Mammary epithelial cell (primary cell): ENCODE measurements at regions of chr17 and their contacts with region 1.

Region 1: DNA sequence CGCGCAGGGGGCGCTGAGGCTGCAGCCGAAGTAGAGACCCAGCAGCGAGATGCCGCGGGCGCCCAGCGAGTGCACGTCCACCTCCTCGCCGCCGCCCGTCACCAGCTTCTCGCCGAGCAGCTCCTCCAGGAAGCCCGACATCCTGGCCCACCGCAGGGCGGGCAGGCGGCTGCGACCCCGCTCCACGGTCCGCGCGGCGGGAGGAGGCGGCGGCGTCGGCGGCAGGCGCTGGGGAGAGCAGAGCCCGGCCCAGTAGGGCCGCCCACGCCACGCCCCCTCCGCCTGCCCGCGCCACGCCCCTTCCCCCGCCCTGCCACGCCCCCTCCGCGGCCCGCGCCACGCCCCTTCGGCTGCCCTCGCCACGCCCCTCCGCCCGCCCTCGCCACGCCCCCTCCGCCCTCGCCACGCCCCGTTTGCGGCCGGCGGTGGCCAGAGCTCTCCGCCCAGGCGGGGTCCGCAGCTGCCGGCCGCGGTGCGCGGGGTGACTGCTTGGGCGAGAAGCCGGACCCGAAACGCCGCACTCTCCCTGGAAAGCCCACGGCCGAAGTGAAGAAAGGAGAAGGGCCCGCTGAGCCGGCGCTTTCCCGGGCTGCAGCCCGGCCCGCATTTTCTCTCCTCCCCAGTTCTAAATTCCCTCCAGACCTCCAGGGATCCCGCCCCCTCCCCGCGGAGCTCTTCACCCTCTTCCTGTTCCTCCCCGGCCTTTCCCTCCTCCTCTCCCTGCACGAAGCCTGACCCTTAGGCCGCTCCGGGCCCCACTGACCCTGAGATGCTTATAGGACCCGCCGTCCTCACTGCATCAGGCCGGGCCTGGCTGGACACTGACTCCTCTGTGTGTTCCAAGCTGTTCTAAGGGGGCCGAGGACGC is at the start of gene NXN:
- DNase-seq: peak; percentile 71
- H3K4me3 ChIP-seq: peak within 1 kb of the TSS; percentile 69 to 93 (median 90)
- H3K27ac ChIP-seq: peak within 1 kb of the TSS; percentile 79
- H3K4me1 ChIP-seq: peaks cover 25% of the 10 kb centered on the region
- H3K27me3 ChIP-seq: no peaks in the 10 kb centered on the region
- CTCF ChIP-seq: peak in 1 of 2 donors; percentile 43
- total RNA-seq, gene NXN: 126 to 128 TPM

Region 2: GRCh38 chr17:409848-410545 is 569.8 kb before region 1 on chr17:
- CTCF ChIA-PET with region 1: interaction called, 22 read pairs
- dilution Hi-C with region 1: no loop called
- in situ Hi-C with region 1: no loop called
- intact Hi-C with region 1: no loop called
- DNase-seq: peak; percentile 97
- H3K4me3 ChIP-seq: peak overlapping the region; percentile 65 to 67 (median 66)
- H3K27ac ChIP-seq: peak overlapping the region; percentile 66
- H3K4me1 ChIP-seq: peaks cover 6% of the 10 kb centered on the region
- H3K27me3 ChIP-seq: no peaks in the 10 kb centered on the region
- CTCF ChIP-seq: no peak

Region 3: GRCh38 chr17:732067-732901 is 247.5 kb before region 1 on chr17 and contains the start of gene TLCD3A:
- CTCF ChIA-PET with region 1: no interaction called
- dilution Hi-C with region 1: no loop called
- in situ Hi-C with region 1: no loop called
- intact Hi-C with region 1: loop called (anchors 5 kb)
- DNase-seq: peak; percentile 75
- H3K4me3 ChIP-seq: peak within 1 kb of the TSS; percentile 55 to 85 (median 79)
- H3K27ac ChIP-seq: peak within 1 kb of the TSS; percentile 98
- H3K4me1 ChIP-seq: peaks cover 44% of the 10 kb centered on the region
- H3K27me3 ChIP-seq: no peaks in the 10 kb centered on the region
- CTCF ChIP-seq: no peak
- total RNA-seq, gene TLCD3A: 24.2 to 41.1 TPM

Region 4: GRCh38 chr17:794876-795275 is 184.9 kb before region 1 on chr17:
- CTCF ChIA-PET with region 1: interaction called, 5 read pairs
- dilution Hi-C with region 1: loop called (anchors 5 kb)
- in situ Hi-C with region 1: loop called in 1 of 2 experiments (anchors 5 kb)
- intact Hi-C with region 1: loop called (anchors 1 kb)
- DNase-seq: peak; percentile 37
- H3K4me3 ChIP-seq: no peak overlapping the region
- H3K27ac ChIP-seq: no peak overlapping the region
- H3K4me1 ChIP-seq: peaks cover 25% of the 10 kb centered on the region
- H3K27me3 ChIP-seq: no peaks in the 10 kb centered on the region
- CTCF ChIP-seq: peak; percentile 48 to 75

Region 5: GRCh38 chr17:903981-904481 is 75.7 kb before region 1 on chr17:
- CTCF ChIA-PET with region 1: interaction called, 6 read pairs
- dilution Hi-C with region 1: loop called (anchors 5 kb)
- in situ Hi-C with region 1: no loop called
- intact Hi-C with region 1: no loop called
- DNase-seq: peak; percentile 94
- H3K4me3 ChIP-seq: peak overlapping the region in 1 of 3 experiments; percentile 12
- H3K27ac ChIP-seq: peak overlapping the region; percentile 86
- H3K4me1 ChIP-seq: peaks cover 40% of the 10 kb centered on the region
- H3K27me3 ChIP-seq: no peaks in the 10 kb centered on the region
- CTCF ChIP-seq: no peak

Region 6: DNA sequence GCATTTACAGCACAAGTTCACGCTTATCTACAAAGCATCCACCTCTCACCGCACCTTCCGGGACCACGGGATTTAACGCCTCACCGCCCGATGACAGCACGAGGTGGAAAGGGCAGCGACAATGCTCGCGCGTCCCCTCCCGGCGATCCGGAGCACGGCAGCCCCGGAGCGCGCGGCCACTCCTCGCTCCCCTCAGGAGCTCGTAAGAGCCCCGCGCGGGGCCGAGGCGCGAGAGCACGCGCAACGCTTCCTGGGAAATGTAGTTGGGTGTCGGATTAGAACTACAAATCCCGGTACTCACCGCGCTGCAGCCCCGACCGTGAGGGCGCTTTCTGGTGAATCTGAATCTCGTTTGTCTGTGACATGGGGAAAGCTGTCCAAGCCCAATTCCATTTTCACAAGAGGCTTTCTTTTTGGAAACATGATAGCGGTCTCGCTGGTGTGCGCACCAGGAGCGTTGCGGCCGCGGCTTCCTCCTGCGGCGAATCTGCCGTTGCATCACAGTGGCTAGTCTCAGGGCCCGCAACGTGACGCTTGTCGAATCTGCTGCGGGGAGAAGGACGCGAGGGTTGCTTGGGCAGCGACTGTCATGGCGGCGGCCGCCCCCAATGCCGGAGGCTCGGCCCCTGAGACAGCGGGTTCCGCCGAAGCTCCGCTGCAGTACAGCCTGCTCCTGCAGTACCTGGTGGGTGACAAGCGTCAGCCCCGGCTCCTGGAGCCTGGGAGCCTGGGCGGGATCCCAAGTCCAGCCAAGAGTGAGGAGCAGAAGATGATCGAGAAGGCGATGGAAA is 17.0 kb after region 1 on chr17 and contains the start of gene TIMM22:
- CTCF ChIA-PET with region 1: no interaction called
- dilution Hi-C with region 1: no loop called
- in situ Hi-C with region 1: no loop called
- intact Hi-C with region 1: loop called (anchors 1 kb)
- DNase-seq: peak; percentile 98
- H3K4me3 ChIP-seq: peak within 1 kb of the TSS; percentile 85 to 100 (median 87)
- H3K27ac ChIP-seq: peak within 1 kb of the TSS; percentile 94
- H3K4me1 ChIP-seq: peaks cover 25% of the 10 kb centered on the region
- H3K27me3 ChIP-seq: no peaks in the 10 kb centered on the region
- CTCF ChIP-seq: peak; percentile 93
- total RNA-seq, gene TIMM22: 14.3 to 17.2 TPM